ENCODE measurements at regions of chr14 and their contacts with region 1.

Region 1: GRCh38 chr14:58297762-58298476 is 436 bp upstream of the ARID4A start:
- DNase-seq: peak; percentile 99
- H3K4me3 Mint-ChIP-seq: no peak overlapping the region
- H3K27ac Mint-ChIP-seq: no peak overlapping the region
- H3K4me1 Mint-ChIP-seq: peaks cover 35% of the 10 kb centered on the region
- H3K27me3 Mint-ChIP-seq: no peaks in the 10 kb centered on the region

Region 2: GRCh38 chr14:57390028-57390805 is 907.7 kb before region 1 on chr14 and contains the start of gene NAA30:
- CTCF ChIA-PET with region 1: no interaction called
- POLR2A ChIA-PET with region 1: no interaction called
- intact Hi-C with region 1: loop called (anchors 5 kb)
- DNase-seq: peak; percentile 96
- H3K4me3 Mint-ChIP-seq: peak within 1 kb of the TSS; percentile 82
- H3K27ac Mint-ChIP-seq: peak within 1 kb of the TSS; percentile 92
- H3K4me1 Mint-ChIP-seq: peaks cover 44% of the 10 kb centered on the region
- H3K27me3 Mint-ChIP-seq: no peaks in the 10 kb centered on the region
- total RNA-seq, gene NAA30: 14.4 to 16.9 TPM

Region 3: DNA sequence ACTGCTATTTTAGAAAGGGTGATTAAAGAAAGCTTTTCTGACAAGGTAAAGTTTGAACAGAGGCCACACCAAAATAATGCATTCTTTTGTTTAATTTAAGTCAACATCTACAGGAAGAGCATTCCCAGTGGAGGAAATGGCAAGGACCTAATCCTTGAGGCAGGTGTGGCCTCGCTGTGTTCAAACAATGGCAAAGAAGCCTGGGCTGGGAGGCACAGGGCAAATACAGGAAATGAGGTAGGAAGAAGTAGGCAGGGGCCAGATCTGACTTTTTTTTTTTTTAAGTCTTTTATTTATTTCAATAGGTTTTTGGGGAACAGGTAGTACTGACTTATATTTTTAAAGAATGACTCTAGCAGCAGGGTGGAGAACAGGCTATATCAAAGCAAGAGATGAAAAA is 199.4 kb before region 1 on chr14:
- CTCF ChIA-PET with region 1: no interaction called
- POLR2A ChIA-PET with region 1: no interaction called
- intact Hi-C with region 1: no loop called
- DNase-seq: no peak
- H3K4me3 Mint-ChIP-seq: no peak overlapping the region
- H3K27ac Mint-ChIP-seq: no peak overlapping the region
- H3K4me1 Mint-ChIP-seq: no peaks in the 10 kb centered on the region
- H3K27me3 Mint-ChIP-seq: peaks cover 2% of the 10 kb centered on the region

Region 4: GRCh38 chr14:58239244-58240195 is 58.4 kb before region 1 on chr14:
- CTCF ChIA-PET with region 1: interaction called, 4 read pairs
- POLR2A ChIA-PET with region 1: interaction called, 31 read pairs
- intact Hi-C with region 1: loop called (anchors 1 kb)
- DNase-seq: peak; percentile 84
- H3K4me3 Mint-ChIP-seq: no peak overlapping the region
- H3K27ac Mint-ChIP-seq: no peak overlapping the region
- H3K4me1 Mint-ChIP-seq: peaks cover 23% of the 10 kb centered on the region
- H3K27me3 Mint-ChIP-seq: no peaks in the 10 kb centered on the region

Region 5: GRCh38 chr14:58275527-58276190 is 22.3 kb before region 1 on chr14:
- CTCF ChIA-PET with region 1: interaction called, 4 read pairs
- POLR2A ChIA-PET with region 1: interaction called, 10 read pairs
- intact Hi-C with region 1: loop called (anchors 1 kb)
- DNase-seq: no peak
- H3K4me3 Mint-ChIP-seq: no peak overlapping the region
- H3K27ac Mint-ChIP-seq: peak overlapping the region; percentile 85
- H3K4me1 Mint-ChIP-seq: peaks cover 49% of the 10 kb centered on the region
- H3K27me3 Mint-ChIP-seq: no peaks in the 10 kb centered on the region

Region 6: GRCh38 chr14:58362798-58363412 is 65.0 kb after region 1 on chr14:
- CTCF ChIA-PET with region 1: no interaction called
- POLR2A ChIA-PET with region 1: no interaction called
- intact Hi-C with region 1: loop called (anchors 2 kb)
- DNase-seq: no peak
- H3K4me3 Mint-ChIP-seq: no peak overlapping the region
- H3K27ac Mint-ChIP-seq: no peak overlapping the region
- H3K4me1 Mint-ChIP-seq: peaks cover 7% of the 10 kb centered on the region
- H3K27me3 Mint-ChIP-seq: no peaks in the 10 kb centered on the region

Region 7: DNA sequence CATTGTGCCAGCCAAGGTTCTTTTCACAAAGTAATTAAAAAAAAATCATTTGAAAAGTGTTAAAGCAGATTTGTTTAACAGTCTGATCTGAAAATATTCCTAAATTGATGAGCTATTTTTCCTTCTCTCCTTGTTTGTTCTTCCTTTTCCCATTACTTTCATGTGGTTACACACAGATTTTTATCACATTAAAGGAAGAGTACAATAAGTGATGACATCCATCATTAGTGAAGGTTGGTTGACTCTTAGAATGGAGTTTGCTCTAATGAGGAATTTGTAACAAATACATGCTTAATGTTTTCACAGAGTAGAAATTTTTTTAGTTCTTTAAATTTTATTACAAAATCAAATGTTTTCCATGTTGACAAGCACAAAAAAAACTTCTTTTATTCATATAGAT is 78.9 kb after region 1 on chr14:
- CTCF ChIA-PET with region 1: no interaction called
- POLR2A ChIA-PET with region 1: no interaction called
- intact Hi-C with region 1: no loop called
- DNase-seq: no peak
- H3K4me3 Mint-ChIP-seq: no peak overlapping the region
- H3K27ac Mint-ChIP-seq: no peak overlapping the region
- H3K4me1 Mint-ChIP-seq: no peaks in the 10 kb centered on the region
- H3K27me3 Mint-ChIP-seq: no peaks in the 10 kb centered on the region